Psoas muscle (tissue), 8 donors: ENCODE measurements at regions of chr2 and their contacts with region 1.

Region 1: DNA sequence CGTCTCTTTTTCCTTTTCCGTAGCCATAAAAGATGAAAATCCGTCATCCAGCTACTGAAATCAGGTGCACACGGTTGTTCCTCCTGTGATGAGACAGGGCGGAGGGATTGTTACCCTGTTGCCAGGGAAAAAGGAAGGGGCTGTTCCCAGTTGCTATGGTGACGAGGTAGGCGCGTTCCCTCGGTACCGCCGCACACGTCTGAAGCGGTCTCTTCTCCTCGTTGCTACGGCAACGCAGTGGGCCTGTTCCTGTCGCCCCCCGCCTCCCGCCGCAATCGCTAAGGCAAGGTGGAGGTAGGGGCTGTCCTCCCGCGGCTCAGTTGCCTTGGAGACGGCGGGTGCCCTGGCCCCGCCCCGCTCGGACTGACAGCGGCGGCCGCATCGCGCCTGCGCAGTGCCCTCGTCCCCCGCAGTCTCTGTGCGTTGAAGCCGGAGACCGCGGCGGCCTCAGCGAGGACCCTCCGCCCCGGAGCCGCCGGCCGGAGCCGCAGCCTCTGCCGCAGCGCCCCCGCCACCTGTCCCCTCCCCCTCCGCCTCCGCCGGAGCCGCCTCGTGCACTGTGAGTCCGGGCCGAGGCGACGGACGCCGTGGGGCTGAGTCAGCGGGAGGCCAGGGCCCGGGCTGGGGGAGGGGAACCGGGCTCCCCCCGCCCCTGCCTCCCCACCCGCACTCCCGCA is at the start of gene MAPRE3:
- DNase-seq: peak; percentile 84 to 88
- ATAC-seq: peak; percentile 79 to 87 (median 86)
- H3K4me3 ChIP-seq: peak within 1 kb of the TSS; percentile 96
- H3K27ac ChIP-seq: peak within 1 kb of the TSS; percentile 96
- H3K4me1 ChIP-seq: peaks cover 38% of the 10 kb centered on the region
- H3K27me3 ChIP-seq: no peaks in the 10 kb centered on the region
- CTCF ChIP-seq: no peak
- total RNA-seq, gene MAPRE3: 101 to 148 (median 122) TPM

Region 2: GRCh38 chr2:27211829-27212627 is 241.6 kb after region 1 on chr2 and contains the starts of genes ATRAID and SLC5A6:
- intact Hi-C with region 1: loop called in 1 of 2 experiments (anchors 10 kb)
- DNase-seq: peak; percentile 91 to 95
- ATAC-seq: peak; percentile 93 to 96 (median 94)
- H3K4me3 ChIP-seq: peak within 1 kb of the TSS; percentile 98
- H3K27ac ChIP-seq: peak within 1 kb of the TSS; percentile 100
- H3K4me1 ChIP-seq: peaks cover 17% of the 10 kb centered on the region
- H3K27me3 ChIP-seq: no peaks in the 10 kb centered on the region
- CTCF ChIP-seq: no peak
- total RNA-seq, gene ATRAID: 87.1 to 113 (median 98.2) TPM
- total RNA-seq, gene SLC5A6: 16.8 to 64.2 (median 21.1) TPM

Region 3: DNA sequence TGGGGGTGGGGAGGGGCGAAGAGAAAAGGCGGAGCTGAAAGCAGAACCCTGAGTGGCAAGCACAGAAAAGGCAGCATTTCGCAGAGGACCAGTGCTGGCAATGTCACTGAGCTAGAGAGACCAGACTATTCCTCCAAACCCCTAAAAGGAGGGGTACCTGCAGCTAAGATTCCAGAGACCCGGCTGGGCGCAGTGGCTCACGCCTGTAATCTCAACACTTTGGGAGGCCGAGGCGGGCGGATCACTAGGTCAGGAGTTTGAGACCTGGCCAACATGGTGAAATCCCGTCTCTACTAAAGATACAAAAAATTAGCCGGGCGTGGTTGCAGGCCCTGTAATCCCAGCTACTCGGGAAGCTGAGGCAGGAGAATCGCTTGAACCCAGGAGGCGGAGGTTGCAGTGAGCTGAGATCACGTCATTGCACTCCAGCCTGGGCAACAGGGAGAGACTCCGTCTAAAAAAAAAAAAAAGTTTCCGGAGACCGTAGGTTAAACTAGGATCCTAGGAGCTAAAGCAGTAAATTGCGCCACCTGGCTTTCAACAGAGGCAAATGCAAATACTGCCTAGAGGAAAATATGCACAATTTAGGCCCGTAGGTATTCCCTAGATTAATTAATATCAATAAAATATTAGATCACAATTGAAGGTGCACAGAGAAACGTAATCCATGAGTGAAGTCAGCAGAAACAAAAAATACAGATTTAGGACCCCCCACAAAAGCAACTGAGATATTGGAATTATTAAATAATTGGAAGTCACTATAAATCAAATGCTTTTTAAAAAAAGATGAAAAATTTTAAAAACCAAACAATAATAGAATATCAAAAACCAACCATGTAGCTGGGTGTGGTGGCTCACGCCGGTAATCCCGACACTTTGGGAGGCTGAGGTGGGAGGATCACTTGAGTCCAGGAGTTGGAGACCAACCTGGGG is 333.0 kb after region 1 on chr2:
- intact Hi-C with region 1: loop called in 1 of 2 experiments (anchors 10 kb)
- DNase-seq: peak in 1 of 2 donors; percentile 62
- ATAC-seq: peak; percentile 28 to 67 (median 51)
- H3K4me3 ChIP-seq: peak overlapping the region; percentile 49
- H3K27ac ChIP-seq: peak overlapping the region; percentile 65
- H3K4me1 ChIP-seq: peaks cover 23% of the 10 kb centered on the region
- H3K27me3 ChIP-seq: no peaks in the 10 kb centered on the region
- CTCF ChIP-seq: peak; percentile 79